Mammary epithelial cell (primary cell): ENCODE measurements at regions of chr10 and their contacts with region 1.

Region 1: DNA sequence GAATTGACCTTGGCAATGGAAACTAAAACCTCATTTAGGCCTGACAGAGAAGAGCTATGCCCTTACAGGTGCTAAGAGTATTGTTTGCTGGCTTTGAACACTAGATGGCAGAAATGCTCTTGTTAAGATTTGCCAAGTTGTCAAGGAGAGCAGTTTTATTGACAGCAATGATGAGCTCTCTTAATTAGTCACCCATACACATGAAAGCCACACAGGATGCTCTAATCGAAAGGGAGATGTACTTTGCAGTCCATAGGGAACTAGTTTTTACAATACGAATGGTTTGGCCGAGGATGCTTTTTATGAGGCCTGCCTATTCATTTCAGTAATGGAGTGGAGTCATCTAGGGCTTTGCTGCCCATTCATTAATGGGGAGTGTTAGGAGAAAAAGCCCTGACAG is 45.4 kb upstream of the MBL2 start:
- DNase-seq: peak; percentile 79
- H3K4me3 ChIP-seq: no peak overlapping the region
- H3K27ac ChIP-seq: peak overlapping the region; percentile 22
- H3K4me1 ChIP-seq: peaks cover 5% of the 10 kb centered on the region
- H3K27me3 ChIP-seq: no peaks in the 10 kb centered on the region
- CTCF ChIP-seq: peak; percentile 74 to 81

Region 2: DNA sequence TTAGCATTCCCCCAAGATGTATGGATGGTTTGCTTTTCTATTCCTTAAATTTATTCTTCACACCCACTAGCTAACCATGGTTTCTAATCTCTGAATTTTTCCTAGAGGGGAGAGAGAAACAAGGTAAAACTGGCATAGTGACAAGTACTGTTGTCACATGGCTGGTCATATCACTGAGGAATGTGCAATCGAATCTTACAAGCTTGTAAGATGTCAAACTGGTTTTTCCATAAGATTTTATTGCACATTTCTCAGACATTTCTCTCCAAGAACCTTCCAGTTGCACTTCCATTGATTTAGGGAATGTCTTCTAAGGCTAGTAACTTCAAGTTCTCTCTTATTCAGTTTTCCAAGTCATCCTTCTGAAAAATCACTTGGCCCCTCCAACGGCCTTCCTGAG is 135.2 kb before region 1 on chr10:
- CTCF ChIA-PET with region 1: no interaction called
- dilution Hi-C with region 1: no loop called
- in situ Hi-C with region 1: no loop called
- intact Hi-C with region 1: no loop called
- DNase-seq: peak; percentile 32
- H3K4me3 ChIP-seq: no peak overlapping the region
- H3K27ac ChIP-seq: no peak overlapping the region
- H3K4me1 ChIP-seq: no peaks in the 10 kb centered on the region
- H3K27me3 ChIP-seq: no peaks in the 10 kb centered on the region
- CTCF ChIP-seq: no peak

Region 3: GRCh38 chr10:52864201-52865106 is 46.4 kb after region 1 on chr10:
- CTCF ChIA-PET with region 1: interaction called, 4 read pairs
- dilution Hi-C with region 1: no loop called
- in situ Hi-C with region 1: no loop called
- intact Hi-C with region 1: loop called (anchors 5 kb)
- DNase-seq: peak; percentile 98
- H3K4me3 ChIP-seq: no peak overlapping the region
- H3K27ac ChIP-seq: peak overlapping the region; percentile 31
- H3K4me1 ChIP-seq: peaks cover 24% of the 10 kb centered on the region
- H3K27me3 ChIP-seq: no peaks in the 10 kb centered on the region
- CTCF ChIP-seq: no peak

Region 4: GRCh38 chr10:53209944-53210611 is 392.1 kb after region 1 on chr10:
- CTCF ChIA-PET with region 1: no interaction called
- dilution Hi-C with region 1: no loop called
- in situ Hi-C with region 1: loop called in 1 of 2 experiments (anchors 25 kb)
- intact Hi-C with region 1: loop called (anchors 5 kb)
- DNase-seq: peak; percentile 39
- H3K4me3 ChIP-seq: no peak overlapping the region
- H3K27ac ChIP-seq: no peak overlapping the region
- H3K4me1 ChIP-seq: no peaks in the 10 kb centered on the region
- H3K27me3 ChIP-seq: no peaks in the 10 kb centered on the region
- CTCF ChIP-seq: peak; percentile 64 to 66

Region 5: GRCh38 chr10:53997953-53998352 is 1179.9 kb after region 1 on chr10:
- CTCF ChIA-PET with region 1: no interaction called
- dilution Hi-C with region 1: no loop called
- in situ Hi-C with region 1: no loop called
- intact Hi-C with region 1: loop called (anchors 5 kb)
- DNase-seq: peak; percentile 0
- H3K4me3 ChIP-seq: no peak overlapping the region
- H3K27ac ChIP-seq: no peak overlapping the region
- H3K4me1 ChIP-seq: no peaks in the 10 kb centered on the region
- H3K27me3 ChIP-seq: no peaks in the 10 kb centered on the region
- CTCF ChIP-seq: peak in 1 of 2 donors; percentile 44